ENCODE measurements at regions of chr4 and their contacts with region 1.

Region 1: GRCh38 chr4:145107126-145107525 is 9.0 kb downstream of the ABCE1 start:
- DNase-seq: no peak
- H3K4me3 ChIP-seq: no peak overlapping the region
- H3K27ac ChIP-seq: no peak overlapping the region
- H3K4me1 ChIP-seq: no peaks in the 10 kb centered on the region
- H3K27me3 ChIP-seq: no peaks in the 10 kb centered on the region
- CTCF ChIP-seq: no peak

Region 2: GRCh38 chr4:143539670-143540023 is 1567.5 kb before region 1 on chr4:
- CTCF ChIA-PET with region 1: no interaction called
- POLR2A ChIA-PET with region 1: no interaction called
- intact Hi-C with region 1: loop called (anchors 10 kb)
- DNase-seq: no peak
- H3K4me3 ChIP-seq: no peak overlapping the region
- H3K27ac ChIP-seq: no peak overlapping the region
- H3K4me1 ChIP-seq: no peaks in the 10 kb centered on the region
- H3K27me3 ChIP-seq: no peaks in the 10 kb centered on the region
- CTCF ChIP-seq: no peak

Region 3: GRCh38 chr4:145041378-145041777 is 65.7 kb before region 1 on chr4:
- CTCF ChIA-PET with region 1: no interaction called
- POLR2A ChIA-PET with region 1: no interaction called
- intact Hi-C with region 1: no loop called
- DNase-seq: no peak
- H3K4me3 ChIP-seq: no peak overlapping the region
- H3K27ac ChIP-seq: no peak overlapping the region
- H3K4me1 ChIP-seq: no peaks in the 10 kb centered on the region
- H3K27me3 ChIP-seq: no peaks in the 10 kb centered on the region
- CTCF ChIP-seq: no peak

Region 4: DNA sequence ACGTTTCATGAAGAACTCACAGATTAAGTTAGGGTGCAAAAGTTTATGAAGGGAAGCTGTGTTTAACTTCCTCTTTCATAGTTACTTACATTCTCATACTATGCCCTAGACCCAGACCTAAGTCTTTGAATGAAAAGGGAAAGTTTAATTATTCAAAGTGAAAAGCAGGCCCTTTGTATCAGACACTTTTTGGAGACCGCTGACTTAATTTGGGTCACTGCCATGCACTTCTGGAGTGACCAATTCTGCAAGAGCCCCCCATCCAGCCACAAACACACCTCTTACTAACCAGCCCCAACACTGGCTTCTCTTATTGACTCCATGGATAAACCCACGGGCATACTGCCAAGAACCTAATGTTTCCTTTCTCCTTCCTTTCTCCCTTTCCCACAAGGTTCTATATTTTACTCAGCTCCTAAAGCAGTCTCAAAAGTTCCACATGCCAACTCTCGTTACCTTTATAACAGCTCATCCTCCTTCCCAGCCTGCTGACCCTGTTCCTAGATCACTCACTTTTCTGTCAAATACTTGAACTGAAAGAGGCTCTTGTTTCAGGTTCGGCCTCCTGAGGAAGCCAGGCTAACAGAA is 25.5 kb after region 1 on chr4:
- CTCF ChIA-PET with region 1: no interaction called
- POLR2A ChIA-PET with region 1: no interaction called
- intact Hi-C with region 1: no loop called
- DNase-seq: no peak
- H3K4me3 ChIP-seq: no peak overlapping the region
- H3K27ac ChIP-seq: no peak overlapping the region
- H3K4me1 ChIP-seq: no peaks in the 10 kb centered on the region
- H3K27me3 ChIP-seq: no peaks in the 10 kb centered on the region
- CTCF ChIP-seq: no peak

Measured in PC-9 (cell line).